CD14-positive monocyte (primary cell): ENCODE measurements at regions of chr1 and their contacts with region 1.

Region 1: DNA sequence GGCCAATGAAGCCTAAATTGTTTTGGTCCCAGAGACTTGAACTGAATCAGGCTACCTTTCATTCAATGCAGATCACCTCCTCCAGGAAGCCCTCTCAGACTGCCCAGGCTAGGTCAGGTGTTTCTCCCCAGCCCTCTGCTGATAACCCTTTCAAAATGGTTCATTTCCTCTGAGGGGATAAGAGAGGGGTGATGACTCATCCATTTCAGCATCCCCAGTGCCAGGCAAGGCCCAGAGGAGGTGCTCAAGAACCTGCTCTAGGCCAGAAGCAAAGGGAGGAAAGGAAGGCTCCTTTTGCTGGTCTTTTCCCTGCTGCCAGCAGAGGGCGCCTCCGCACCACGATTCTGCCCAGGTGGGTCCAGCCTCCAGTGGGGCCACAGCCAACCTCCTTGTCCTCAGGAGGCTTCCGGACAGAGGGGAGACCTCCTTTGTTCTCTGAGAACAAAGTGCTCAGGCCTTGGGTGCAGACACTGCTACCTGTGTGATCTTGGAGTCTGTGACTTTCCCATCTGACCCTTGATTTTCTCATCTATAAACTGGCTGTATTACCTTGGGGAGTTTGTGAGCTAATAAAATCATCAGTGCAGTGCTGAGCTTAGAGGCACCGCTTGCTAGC is 45.3 kb upstream of the ARHGEF10L start:
- DNase-seq: peak; percentile 41 to 70 (median 49)
- H3K4me3 ChIP-seq: no peak overlapping the region
- H3K4me3 Mint-ChIP-seq: no peak overlapping the region
- H3K27ac ChIP-seq: no peak overlapping the region
- H3K27ac Mint-ChIP-seq: no peak overlapping the region
- H3K4me1 ChIP-seq: no peaks in the 10 kb centered on the region
- H3K4me1 Mint-ChIP-seq: no peaks in the 10 kb centered on the region
- H3K27me3 ChIP-seq: peaks cover 0 to 3% of the 10 kb centered on the region in 2 donors
- H3K27me3 Mint-ChIP-seq: peaks cover 5 to 15% (median 14%) of the 10 kb centered on the region in 3 donors
- CTCF ChIP-seq: peak; percentile 97

Region 2: DNA sequence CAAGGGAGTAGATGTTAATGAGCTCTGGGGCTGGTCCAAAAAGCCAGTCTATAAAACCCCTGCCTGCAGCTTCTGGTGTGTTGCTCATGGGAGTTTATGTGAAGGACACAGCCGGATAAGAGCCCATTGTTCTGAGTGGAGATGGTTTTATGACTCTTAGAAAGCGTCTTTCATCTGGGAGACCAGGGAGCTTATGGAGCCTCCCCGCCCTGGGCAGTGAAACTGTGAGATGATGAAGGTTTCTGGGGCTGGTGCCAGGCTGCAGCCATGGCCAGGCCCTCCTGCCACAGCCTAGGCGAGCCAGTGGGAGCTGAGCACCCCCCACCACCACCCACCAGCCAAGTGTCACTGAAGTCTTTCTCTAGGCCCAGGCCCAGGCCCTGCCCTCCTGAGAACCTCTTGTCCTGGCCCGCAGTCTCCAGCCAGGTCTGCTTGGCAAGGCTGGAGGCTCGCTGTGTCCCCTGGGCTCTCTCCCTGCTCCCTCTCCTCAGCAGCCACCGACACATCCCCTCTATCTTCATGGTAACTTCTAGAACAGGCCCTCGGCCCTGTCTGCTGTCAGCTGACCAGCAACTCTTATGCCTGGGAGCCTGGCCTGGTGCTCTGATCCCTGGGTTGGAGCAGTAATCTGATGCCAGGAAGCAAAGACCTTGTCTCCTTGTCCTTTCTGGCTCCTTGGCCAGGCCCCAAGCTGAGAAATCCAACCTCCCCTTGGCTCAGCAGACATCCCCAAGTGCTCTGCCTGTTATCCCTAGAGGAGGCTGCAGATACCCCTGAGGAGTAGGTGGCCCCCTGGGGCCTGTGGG is 37.7 kb after region 1 on chr1:
- intact Hi-C with region 1: no loop called
- DNase-seq: no peak
- H3K4me3 ChIP-seq: no peak overlapping the region
- H3K4me3 Mint-ChIP-seq: no peak overlapping the region
- H3K27ac ChIP-seq: no peak overlapping the region
- H3K27ac Mint-ChIP-seq: no peak overlapping the region
- H3K4me1 ChIP-seq: peaks cover 14 to 15% of the 10 kb centered on the region in 2 donors
- H3K4me1 Mint-ChIP-seq: peaks cover 15% of the 10 kb centered on the region
- H3K27me3 ChIP-seq: peaks cover 0 to 3% of the 10 kb centered on the region in 2 donors
- H3K27me3 Mint-ChIP-seq: peaks cover 19 to 36% (median 26%) of the 10 kb centered on the region in 3 donors
- CTCF ChIP-seq: no peak

Region 3: GRCh38 chr1:17606826-17607440 is 112.7 kb after region 1 on chr1:
- intact Hi-C with region 1: loop called in 1 of 2 experiments (anchors 2 kb)
- DNase-seq: peak; percentile 57 to 72 (median 67)
- H3K4me3 ChIP-seq: no peak overlapping the region
- H3K4me3 Mint-ChIP-seq: peak overlapping the region in 1 of 2 donors; percentile 35
- H3K27ac ChIP-seq: no peak overlapping the region
- H3K27ac Mint-ChIP-seq: no peak overlapping the region
- H3K4me1 ChIP-seq: peaks cover 3 to 7% of the 10 kb centered on the region in 2 donors
- H3K4me1 Mint-ChIP-seq: peaks cover 13% of the 10 kb centered on the region
- H3K27me3 ChIP-seq: no peaks in the 10 kb centered on the region
- H3K27me3 Mint-ChIP-seq: peaks cover 9 to 14% (median 9%) of the 10 kb centered on the region in 3 donors
- CTCF ChIP-seq: peak; percentile 98

Region 4: GRCh38 chr1:17826165-17826488 is 331.9 kb after region 1 on chr1:
- intact Hi-C with region 1: loop called (anchors 5 to 10 kb)
- DNase-seq: peak; percentile 1 to 28 (median 6)
- H3K4me3 ChIP-seq: no peak overlapping the region
- H3K4me3 Mint-ChIP-seq: no peak overlapping the region
- H3K27ac ChIP-seq: no peak overlapping the region
- H3K27ac Mint-ChIP-seq: no peak overlapping the region
- H3K4me1 ChIP-seq: no peaks in the 10 kb centered on the region
- H3K4me1 Mint-ChIP-seq: no peaks in the 10 kb centered on the region
- H3K27me3 ChIP-seq: no peaks in the 10 kb centered on the region
- H3K27me3 Mint-ChIP-seq: peaks cover 9 to 26% (median 11%) of the 10 kb centered on the region in 3 donors
- CTCF ChIP-seq: peak; percentile 62

Region 5: DNA sequence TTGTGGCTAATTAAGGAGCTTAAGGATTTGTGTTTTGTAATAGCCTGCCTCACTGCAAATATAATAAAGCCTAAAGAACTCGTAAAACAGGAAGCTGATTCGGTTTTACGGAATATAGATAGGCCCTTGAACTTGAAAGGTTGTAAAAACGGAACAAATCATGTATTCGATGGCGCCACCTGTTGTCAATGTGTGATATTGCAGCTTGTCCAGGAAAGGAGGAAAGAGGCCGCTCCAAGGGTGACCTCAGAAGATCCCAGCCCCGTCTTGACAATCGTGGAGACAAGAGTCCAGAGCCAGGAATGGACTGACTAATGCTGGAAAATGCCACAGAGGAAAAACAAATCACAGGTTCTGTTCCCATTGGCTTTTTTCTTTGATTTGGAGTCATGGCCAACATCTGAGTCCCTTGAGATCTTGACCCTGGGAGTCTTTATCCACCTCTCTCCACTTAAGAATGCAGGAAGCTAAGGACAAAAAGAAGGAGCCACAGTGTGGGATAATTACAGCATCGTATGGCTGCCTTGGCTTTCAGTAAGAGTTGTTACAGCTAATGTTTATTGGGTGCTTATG is 606.4 kb after region 1 on chr1:
- intact Hi-C with region 1: loop called in 1 of 2 experiments (anchors 5 kb)
- DNase-seq: peak; percentile 25 to 38 (median 38)
- H3K4me3 ChIP-seq: no peak overlapping the region
- H3K4me3 Mint-ChIP-seq: no peak overlapping the region
- H3K27ac ChIP-seq: no peak overlapping the region
- H3K27ac Mint-ChIP-seq: no peak overlapping the region
- H3K4me1 ChIP-seq: no peaks in the 10 kb centered on the region
- H3K4me1 Mint-ChIP-seq: no peaks in the 10 kb centered on the region
- H3K27me3 ChIP-seq: peaks cover 0 to 7% of the 10 kb centered on the region in 2 donors
- H3K27me3 Mint-ChIP-seq: peaks cover 14 to 22% (median 14%) of the 10 kb centered on the region in 3 donors
- CTCF ChIP-seq: peak; percentile 83

Region 6: DNA sequence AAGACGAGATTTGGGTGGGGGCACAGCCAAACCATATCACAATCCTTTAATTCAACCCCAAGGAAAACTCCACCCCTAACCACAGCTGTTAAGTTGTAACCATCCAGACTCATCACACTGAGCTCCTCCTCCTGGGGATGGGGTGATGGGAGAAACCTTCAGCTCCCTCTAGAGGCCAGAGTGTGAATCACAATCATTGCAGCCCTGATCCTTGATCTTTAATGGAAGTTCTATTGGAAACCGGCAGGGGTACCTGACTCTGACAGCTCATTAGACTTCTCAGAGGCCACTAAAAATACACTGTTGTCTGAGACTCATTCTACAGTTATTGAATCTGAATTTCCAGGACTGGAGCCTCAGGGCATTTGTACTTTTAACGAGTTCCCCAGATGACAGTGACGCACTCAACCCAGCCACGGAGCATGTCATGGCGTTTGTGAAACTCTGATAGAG is 740.6 kb after region 1 on chr1:
- intact Hi-C with region 1: loop called in 1 of 2 experiments (anchors 5 kb)
- DNase-seq: peak; percentile 4 to 13 (median 8)
- H3K4me3 ChIP-seq: no peak overlapping the region
- H3K4me3 Mint-ChIP-seq: no peak overlapping the region
- H3K27ac ChIP-seq: no peak overlapping the region
- H3K27ac Mint-ChIP-seq: no peak overlapping the region
- H3K4me1 ChIP-seq: no peaks in the 10 kb centered on the region
- H3K4me1 Mint-ChIP-seq: no peaks in the 10 kb centered on the region
- H3K27me3 ChIP-seq: no peaks in the 10 kb centered on the region
- H3K27me3 Mint-ChIP-seq: peaks cover 2 to 13% (median 11%) of the 10 kb centered on the region in 3 donors
- CTCF ChIP-seq: peak; percentile 82